ENCODE measurements at regions of chr11 and their contacts with region 1.

Region 1: GRCh38 chr11:114262681-114263512 is 33.3 kb upstream of the NNMT start:
- DNase-seq: peak; percentile 50
- ATAC-seq: peak; percentile 65
- H3K4me3 Mint-ChIP-seq: no peak overlapping the region
- H3K27ac Mint-ChIP-seq: no peak overlapping the region
- H3K4me1 Mint-ChIP-seq: no peaks in the 10 kb centered on the region
- H3K27me3 Mint-ChIP-seq: no peaks in the 10 kb centered on the region

Region 2: DNA sequence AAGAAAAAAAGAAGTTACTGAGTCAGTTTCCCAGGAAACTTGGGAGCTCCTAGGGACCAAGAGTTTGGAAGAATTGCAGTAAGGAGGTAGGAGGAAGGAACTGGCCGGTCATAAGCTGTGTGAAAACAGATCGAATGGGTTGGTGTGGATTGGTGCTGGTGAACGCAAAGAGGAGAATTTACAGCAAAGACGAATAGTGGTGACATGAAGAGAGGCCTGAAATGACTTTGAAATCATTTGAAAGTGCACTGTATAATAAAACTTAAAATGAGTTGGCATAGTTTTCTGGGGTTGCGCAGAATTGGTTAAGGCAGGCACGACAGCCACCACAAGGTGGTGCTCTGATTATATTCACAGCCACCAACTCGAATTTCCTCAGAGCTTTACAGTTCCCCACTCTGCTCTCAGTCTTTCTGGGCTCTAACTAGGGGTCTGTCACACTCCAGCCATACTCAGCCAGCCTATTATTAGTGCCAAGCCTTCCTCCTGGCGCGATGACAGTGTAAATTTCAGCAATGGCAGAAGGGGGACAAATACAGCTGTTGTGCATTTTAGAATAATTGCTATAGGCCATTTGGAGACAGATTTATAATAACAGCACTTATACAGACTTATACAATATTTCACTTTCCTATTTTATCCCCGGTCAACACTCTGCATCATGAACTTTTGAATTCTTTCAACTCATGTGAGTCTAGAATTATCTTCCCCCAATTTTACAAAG is 366.6 kb before region 1 on chr11:
- CTCF ChIA-PET with region 1: interaction called, 75 read pairs
- DNase-seq: peak; percentile 55
- ATAC-seq: peak; percentile 75
- H3K4me3 Mint-ChIP-seq: no peak overlapping the region
- H3K27ac Mint-ChIP-seq: no peak overlapping the region
- H3K4me1 Mint-ChIP-seq: peaks cover 6% of the 10 kb centered on the region
- H3K27me3 Mint-ChIP-seq: peaks cover 3% of the 10 kb centered on the region

Region 3: DNA sequence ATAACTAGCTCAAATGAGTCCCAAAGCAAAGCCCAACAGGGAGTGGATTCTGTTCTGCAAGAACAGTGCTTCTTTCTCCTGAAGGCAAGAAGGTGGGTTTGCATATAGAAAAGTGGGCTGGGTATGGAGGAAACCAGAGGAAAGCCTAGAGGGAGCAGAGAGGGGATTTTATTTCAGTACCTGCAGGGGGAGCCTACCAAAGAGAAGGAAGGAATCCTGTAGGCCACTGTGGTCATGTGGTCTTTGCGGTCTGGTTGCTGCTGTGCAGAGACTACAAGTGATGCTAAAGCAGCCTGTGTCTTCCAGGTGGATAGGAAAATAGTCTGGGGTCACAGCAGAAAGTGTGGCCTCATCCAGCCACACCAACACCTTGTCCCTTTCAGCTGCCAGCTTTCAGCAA is 236.5 kb before region 1 on chr11:
- CTCF ChIA-PET with region 1: interaction called, 50 read pairs
- DNase-seq: peak; percentile 75
- ATAC-seq: peak; percentile 69
- H3K4me3 Mint-ChIP-seq: no peak overlapping the region
- H3K27ac Mint-ChIP-seq: no peak overlapping the region
- H3K4me1 Mint-ChIP-seq: peaks cover 7% of the 10 kb centered on the region
- H3K27me3 Mint-ChIP-seq: peaks cover 41% of the 10 kb centered on the region

Region 4: GRCh38 chr11:114077482-114078305 is 185.2 kb before region 1 on chr11:
- CTCF ChIA-PET with region 1: interaction called, 10 read pairs
- DNase-seq: peak; percentile 54
- ATAC-seq: peak; percentile 37
- H3K4me3 Mint-ChIP-seq: peak overlapping the region; percentile 44
- H3K27ac Mint-ChIP-seq: peak overlapping the region; percentile 72
- H3K4me1 Mint-ChIP-seq: peaks cover 73% of the 10 kb centered on the region
- H3K27me3 Mint-ChIP-seq: peaks cover 23% of the 10 kb centered on the region

Region 5: GRCh38 chr11:114180301-114181055 is 82.4 kb before region 1 on chr11:
- CTCF ChIA-PET with region 1: interaction called, 19 read pairs
- DNase-seq: no peak
- ATAC-seq: no peak
- H3K4me3 Mint-ChIP-seq: no peak overlapping the region
- H3K27ac Mint-ChIP-seq: no peak overlapping the region
- H3K4me1 Mint-ChIP-seq: peaks cover 64% of the 10 kb centered on the region
- H3K27me3 Mint-ChIP-seq: no peaks in the 10 kb centered on the region

Region 6: GRCh38 chr11:114208377-114208776 is 54.5 kb before region 1 on chr11:
- CTCF ChIA-PET with region 1: interaction called, 26 read pairs
- DNase-seq: peak; percentile 69
- ATAC-seq: peak; percentile 96
- H3K4me3 Mint-ChIP-seq: no peak overlapping the region
- H3K27ac Mint-ChIP-seq: peak overlapping the region; percentile 68
- H3K4me1 Mint-ChIP-seq: peaks cover 40% of the 10 kb centered on the region
- H3K27me3 Mint-ChIP-seq: no peaks in the 10 kb centered on the region

Region 7: DNA sequence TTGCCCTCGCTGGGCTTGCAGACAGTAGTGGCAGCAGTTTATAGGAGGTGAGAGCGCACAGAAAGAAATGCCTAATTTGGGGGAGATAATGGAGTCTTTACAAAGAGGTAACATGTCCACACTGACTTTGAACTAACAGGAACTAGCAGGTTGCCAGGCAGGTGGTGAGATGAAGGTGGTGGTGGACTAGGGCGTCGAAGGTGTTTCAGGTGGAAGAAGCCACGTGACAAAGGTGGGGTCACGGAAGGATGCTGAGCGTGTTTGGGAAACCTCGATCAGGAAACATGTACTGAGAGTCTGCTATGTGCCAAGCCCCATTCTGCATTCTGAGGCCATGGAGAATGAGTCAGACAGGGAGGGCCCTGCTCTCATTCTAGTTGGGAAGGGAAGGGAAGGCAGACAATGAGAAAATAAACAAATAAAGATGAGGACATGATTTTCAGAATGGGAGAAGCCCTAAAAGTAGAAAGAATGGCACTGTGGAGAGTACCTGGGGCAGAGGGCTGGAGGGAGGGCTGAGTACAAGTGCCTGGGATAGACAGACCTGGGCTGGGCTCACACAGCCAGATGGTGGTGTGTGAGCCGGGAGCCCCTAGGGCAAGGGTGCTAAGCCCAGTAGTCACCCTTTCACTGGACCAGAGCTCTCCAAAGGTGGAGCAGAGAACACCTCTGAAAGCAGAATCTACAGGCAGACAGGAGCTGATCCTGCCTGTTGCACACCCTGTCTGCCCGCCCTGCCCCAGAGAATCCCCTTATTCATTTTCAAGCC is 17.1 kb after region 1 on chr11:
- CTCF ChIA-PET with region 1: interaction called, 11 read pairs
- DNase-seq: no peak
- ATAC-seq: no peak
- H3K4me3 Mint-ChIP-seq: no peak overlapping the region
- H3K27ac Mint-ChIP-seq: no peak overlapping the region
- H3K4me1 Mint-ChIP-seq: no peaks in the 10 kb centered on the region
- H3K27me3 Mint-ChIP-seq: peaks cover 36% of the 10 kb centered on the region